ENCODE measurements at regions of chr1 and their contacts with region 1.

Region 1: DNA sequence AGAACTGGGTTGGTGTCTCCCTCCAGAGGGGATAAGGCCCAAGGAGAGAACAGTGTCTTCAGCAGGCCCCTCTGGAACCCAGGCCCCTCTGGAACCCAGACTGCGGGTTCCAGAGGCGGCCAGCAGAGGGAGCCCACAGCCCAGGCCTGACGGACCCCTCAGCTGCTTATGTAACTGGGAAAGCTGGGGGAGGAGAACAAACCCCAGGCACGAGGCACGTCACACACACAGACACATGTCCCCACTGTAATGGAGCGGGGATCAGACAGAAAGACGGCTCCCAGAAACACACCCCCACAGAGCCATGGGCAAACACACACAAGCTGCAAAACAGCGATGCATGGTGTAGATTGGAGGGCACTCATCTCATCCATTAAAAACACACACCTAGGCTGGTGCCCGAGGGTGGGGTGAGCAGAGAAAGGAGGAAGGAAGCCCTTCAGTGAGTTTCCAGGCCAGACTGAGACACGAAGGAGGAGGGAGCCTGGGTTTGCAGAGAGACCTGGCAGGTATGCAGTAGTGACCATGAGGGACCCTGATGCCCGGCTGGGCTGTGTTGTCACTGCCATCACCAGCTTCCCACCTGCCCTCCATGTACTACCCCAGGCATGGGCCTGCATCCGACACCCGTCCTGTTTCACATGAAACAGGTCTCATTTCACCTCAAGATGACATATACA is 2.8 kb upstream of the IGSF8 start:
- DNase-seq: peak; percentile 86
- H3K4me3 ChIP-seq: no peak overlapping the region
- H3K27ac ChIP-seq: no peak overlapping the region
- H3K4me1 ChIP-seq: peaks cover 42% of the 10 kb centered on the region
- CTCF ChIP-seq: peak; percentile 98

Region 2: GRCh38 chr1:160124705-160125478 is 23.7 kb after region 1 on chr1:
- CTCF ChIA-PET with region 1: no interaction called
- POLR2A ChIA-PET with region 1: no interaction called
- intact Hi-C with region 1: no loop called
- DNase-seq: no peak
- H3K4me3 ChIP-seq: no peak overlapping the region
- H3K27ac ChIP-seq: no peak overlapping the region
- H3K4me1 ChIP-seq: no peaks in the 10 kb centered on the region
- CTCF ChIP-seq: no peak

Region 3: DNA sequence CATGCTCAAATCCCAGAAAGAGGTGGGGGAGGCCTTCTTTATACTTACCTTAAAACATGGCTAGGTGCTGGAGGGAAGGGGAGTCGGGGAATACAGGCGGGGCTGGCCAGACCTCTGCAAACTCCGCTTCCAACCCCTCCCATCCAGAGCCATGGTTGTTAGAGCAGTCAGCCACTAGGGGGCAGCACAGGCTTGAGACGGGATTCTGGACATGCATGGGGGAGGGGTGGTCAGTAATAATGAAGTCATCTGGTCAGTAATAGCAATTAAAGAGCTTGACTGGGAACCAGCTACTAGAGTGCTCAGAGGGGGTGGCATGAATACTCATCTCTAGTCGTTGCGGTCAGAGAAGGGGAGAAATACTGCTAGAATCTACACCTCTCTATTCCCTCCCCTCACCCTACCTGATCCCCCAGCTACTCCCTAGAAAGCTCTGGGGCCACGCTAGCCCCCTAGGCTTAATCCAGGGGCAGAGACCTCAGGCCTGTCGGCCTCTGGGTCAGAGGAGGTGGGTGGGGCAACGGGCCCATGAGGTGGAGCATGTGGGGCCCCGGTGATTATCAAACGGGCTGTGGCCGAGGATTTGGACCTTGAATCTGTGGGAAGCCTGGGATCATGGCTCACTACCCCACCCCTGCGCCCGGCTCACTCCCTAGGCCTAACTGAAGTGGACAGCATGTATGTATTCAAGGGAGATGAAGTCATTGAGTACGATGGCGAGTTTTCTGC is 92.1 kb after region 1 on chr1:
- CTCF ChIA-PET with region 1: no interaction called
- POLR2A ChIA-PET with region 1: interaction called, 5 read pairs
- intact Hi-C with region 1: loop called (anchors 1 kb)
- DNase-seq: peak; percentile 83
- H3K4me3 ChIP-seq: no peak overlapping the region
- H3K27ac ChIP-seq: no peak overlapping the region
- H3K4me1 ChIP-seq: peaks cover 7% of the 10 kb centered on the region
- CTCF ChIP-seq: peak; percentile 96

Region 4: DNA sequence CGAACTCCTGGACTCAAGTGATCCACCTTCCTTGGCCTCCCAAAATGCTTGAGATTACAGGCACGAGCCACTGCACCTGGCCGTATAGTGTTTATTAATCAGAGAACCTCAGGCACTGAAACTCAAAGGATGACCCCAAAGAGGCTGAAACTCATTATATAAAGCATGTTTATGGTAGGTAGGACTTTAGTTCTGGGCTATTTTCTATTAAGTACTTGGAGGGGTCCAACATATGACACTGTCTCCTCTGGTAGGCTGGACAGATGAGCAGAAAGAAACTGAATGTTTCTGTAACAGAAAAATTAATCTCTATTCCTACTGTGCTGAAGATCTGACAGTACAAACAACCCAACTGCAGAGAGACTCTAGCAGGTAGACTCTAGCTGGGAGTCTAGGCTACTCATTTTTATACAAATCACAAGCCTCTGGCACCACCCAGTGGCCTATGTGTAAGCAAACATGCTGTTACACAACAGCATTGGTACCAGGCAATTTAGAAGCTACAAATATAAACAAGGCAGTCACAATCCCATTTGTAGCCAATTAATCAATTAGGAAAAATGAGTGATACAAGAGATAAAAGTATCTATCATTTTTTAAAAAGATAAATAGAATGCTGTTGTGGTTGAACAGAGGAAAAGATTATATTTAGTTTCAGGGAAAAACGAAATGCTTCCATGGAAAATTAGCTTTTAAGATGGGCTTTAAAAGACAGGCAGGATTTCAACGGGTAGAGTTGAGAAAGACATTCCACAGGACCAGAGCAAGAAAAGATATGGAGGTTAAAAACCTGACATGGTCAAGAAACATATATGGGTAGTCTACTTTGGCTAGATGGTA is 150.7 kb after region 1 on chr1:
- CTCF ChIA-PET with region 1: interaction called, 8 read pairs
- POLR2A ChIA-PET with region 1: interaction called, 5 read pairs
- intact Hi-C with region 1: loop called (anchors 1 kb)
- DNase-seq: peak; percentile 83
- H3K4me3 ChIP-seq: no peak overlapping the region
- H3K27ac ChIP-seq: no peak overlapping the region
- H3K4me1 ChIP-seq: no peaks in the 10 kb centered on the region
- CTCF ChIP-seq: peak; percentile 96

Region 5: DNA sequence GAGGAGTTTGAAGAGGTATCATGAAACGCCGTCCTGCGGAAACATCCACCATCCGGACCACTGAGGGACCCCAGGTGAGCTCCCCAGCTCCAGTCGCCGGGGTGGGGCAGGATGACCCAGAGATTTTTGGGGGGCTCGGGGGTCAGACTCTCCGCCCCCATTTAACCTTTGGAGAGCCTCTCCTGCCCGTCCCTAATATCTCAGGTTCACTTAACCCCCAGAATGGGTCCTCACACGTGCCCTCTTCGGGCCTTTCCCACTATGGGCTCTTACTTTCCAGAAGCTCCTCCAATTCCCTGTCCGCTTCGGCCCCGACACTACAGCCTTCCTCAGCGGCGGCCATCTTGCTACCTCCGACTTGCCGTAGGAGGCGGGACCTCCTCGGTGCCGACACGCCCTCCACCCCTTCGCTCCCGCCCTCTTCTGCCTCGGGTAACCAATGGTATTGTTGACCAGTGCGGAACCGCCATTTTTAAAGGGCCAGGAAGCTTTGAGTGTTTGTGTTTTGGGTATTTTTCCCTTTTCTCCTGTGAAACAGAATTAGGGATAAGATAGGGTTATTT is 183.7 kb after region 1 on chr1 and contains the start of gene PEX19:
- CTCF ChIA-PET with region 1: no interaction called
- POLR2A ChIA-PET with region 1: interaction called, 5 read pairs
- intact Hi-C with region 1: loop called (anchors 1 kb)
- DNase-seq: peak; percentile 91
- H3K4me3 ChIP-seq: peak within 1 kb of the TSS; percentile 77
- H3K27ac ChIP-seq: peak within 1 kb of the TSS; percentile 25
- H3K4me1 ChIP-seq: peaks cover 9% of the 10 kb centered on the region
- CTCF ChIP-seq: no peak
- total RNA-seq, gene PEX19: 32.6 and 34.7 TPM in 2 replicates

Region 6: GRCh38 chr1:160291248-160292220 is 190.4 kb after region 1 on chr1:
- CTCF ChIA-PET with region 1: interaction called, 8 read pairs
- POLR2A ChIA-PET with region 1: no interaction called
- intact Hi-C with region 1: loop called (anchors 1 kb)
- DNase-seq: peak; percentile 75
- H3K4me3 ChIP-seq: no peak overlapping the region
- H3K27ac ChIP-seq: no peak overlapping the region
- H3K4me1 ChIP-seq: no peaks in the 10 kb centered on the region
- CTCF ChIP-seq: peak; percentile 92

Region 7: GRCh38 chr1:160376525-160377131 is 275.5 kb after region 1 on chr1:
- CTCF ChIA-PET with region 1: interaction called, 4 read pairs
- POLR2A ChIA-PET with region 1: no interaction called
- intact Hi-C with region 1: loop called (anchors 1 kb)
- DNase-seq: peak; percentile 81
- H3K4me3 ChIP-seq: no peak overlapping the region
- H3K27ac ChIP-seq: peak overlapping the region; percentile 44
- H3K4me1 ChIP-seq: peaks cover 21% of the 10 kb centered on the region
- CTCF ChIP-seq: peak; percentile 99

Measured in OCI-LY7 (cell line).